HepG2 (cell line): ENCODE measurements at regions of chr14 and their contacts with region 1.

Region 1: DNA sequence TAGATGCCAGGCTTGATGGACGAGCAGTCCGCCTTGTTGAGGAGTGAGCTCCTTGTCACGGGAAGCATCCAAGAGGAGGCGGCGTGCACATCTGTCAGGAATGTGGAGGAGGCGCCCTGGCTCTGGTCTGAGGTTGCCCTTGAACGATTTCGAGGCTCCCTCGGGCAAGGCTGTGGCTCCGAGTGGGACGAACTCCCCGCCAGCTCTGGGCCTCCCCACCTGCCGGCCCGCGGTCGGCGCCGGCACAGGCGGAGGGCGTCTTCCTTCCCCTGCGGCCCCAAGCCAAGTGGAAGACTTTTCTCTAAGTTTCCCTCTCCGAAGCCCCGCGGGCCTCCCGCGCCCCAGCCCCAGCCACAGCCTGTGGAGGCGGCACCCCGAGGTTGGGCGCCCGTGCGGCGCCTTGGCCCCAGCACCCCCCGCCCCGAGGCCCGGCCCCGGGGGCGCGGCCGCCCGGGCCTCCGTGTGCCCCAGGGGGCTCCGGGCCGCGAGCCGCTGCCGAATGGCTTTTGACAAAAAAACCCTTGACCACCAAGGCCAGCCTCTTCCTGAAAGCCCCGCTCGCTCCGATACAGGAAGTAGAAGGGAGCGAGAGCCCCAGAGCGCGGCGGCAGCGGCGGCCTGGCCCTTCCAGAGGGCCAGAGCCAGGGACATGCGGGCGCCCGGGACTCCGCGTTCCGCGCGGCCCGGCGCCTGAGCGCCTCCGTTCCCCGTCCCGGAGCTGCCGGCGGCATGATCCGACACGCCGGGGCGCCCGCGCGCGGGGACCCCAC is at the start of gene RIN3:
- DNase-seq: peak; percentile 38
- ATAC-seq: peak; percentile 79
- H3K4me3 ChIP-seq: peak within 1 kb of the TSS; percentile 74 to 87 (median 82)
- H3K27ac ChIP-seq: peak within 1 kb of the TSS; percentile 79
- H3K4me1 ChIP-seq: peaks cover 41% of the 10 kb centered on the region
- H3K27me3 ChIP-seq: no peaks in the 10 kb centered on the region; a peak in 1 of 5 replicates
- CTCF ChIP-seq: no peak; the same call in 1 of the 2 replicates
- EP300 ChIP-seq: no peak
- POLR2A ChIP-seq: peak; percentile 33 to 52; a peak in 2 of 4 replicates
- RAD21 ChIP-seq: no peak
- total RNA-seq, gene RIN3: 2.3 and 2.9 TPM in 2 replicates

Region 2: GRCh38 chr14:92323011-92323915 is 190.1 kb before region 1 on chr14 and contains the start of gene SLC24A4:
- CTCF ChIA-PET with region 1: no interaction called
- POLR2A ChIA-PET with region 1: no interaction called
- in situ Hi-C with region 1: no loop called
- intact Hi-C with region 1: no loop called
- DNase-seq: no peak
- ATAC-seq: peak; percentile 64
- H3K4me3 ChIP-seq: no peak within 1 kb of the TSS; a peak in 1 of 6 replicates
- H3K27ac ChIP-seq: no peak within 1 kb of the TSS
- H3K4me1 ChIP-seq: no peaks in the 10 kb centered on the region
- H3K27me3 ChIP-seq: peaks cover 13 to 85% of the 10 kb centered on the region in 2 experiments
- CTCF ChIP-seq: no peak
- EP300 ChIP-seq: no peak
- POLR2A ChIP-seq: no peak
- RAD21 ChIP-seq: no peak
- total RNA-seq, gene SLC24A4: not detected in 2 replicates

Region 3: DNA sequence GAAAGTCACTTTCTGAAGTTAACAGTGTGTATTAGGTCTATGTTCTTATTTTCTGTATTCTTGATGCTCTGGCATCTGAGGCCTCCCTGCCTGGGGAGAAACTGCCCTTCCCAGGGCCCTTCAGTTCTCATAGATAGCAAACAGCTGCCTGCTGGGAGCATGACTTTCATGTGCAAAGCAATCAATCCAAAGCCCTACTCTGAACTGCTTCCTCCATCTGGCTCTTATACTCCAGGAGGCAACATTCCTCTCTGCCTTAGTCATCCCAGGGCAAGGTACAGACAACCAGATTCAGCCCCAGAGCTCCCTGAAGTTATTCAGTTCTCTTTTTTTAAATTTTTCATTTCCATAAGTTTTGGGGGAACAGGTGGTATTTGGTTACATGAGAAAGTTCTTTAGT is 41.5 kb before region 1 on chr14:
- CTCF ChIA-PET with region 1: no interaction called
- POLR2A ChIA-PET with region 1: interaction called, 3 read pairs
- in situ Hi-C with region 1: no loop called
- intact Hi-C with region 1: loop called (anchors 5 kb)
- DNase-seq: peak; percentile 73
- ATAC-seq: peak; percentile 91
- H3K4me3 ChIP-seq: no peak overlapping the region
- H3K27ac ChIP-seq: no peak overlapping the region
- H3K4me1 ChIP-seq: peaks cover 45% of the 10 kb centered on the region
- H3K27me3 ChIP-seq: no peaks in the 10 kb centered on the region; a peak in 2 of 5 replicates
- CTCF ChIP-seq: no peak
- EP300 ChIP-seq: no peak
- POLR2A ChIP-seq: no peak
- RAD21 ChIP-seq: no peak

Region 4: GRCh38 chr14:92538412-92538985 is 25.1 kb after region 1 on chr14:
- CTCF ChIA-PET with region 1: no interaction called
- POLR2A ChIA-PET with region 1: no interaction called
- in situ Hi-C with region 1: no loop called
- intact Hi-C with region 1: loop called (anchors 2 kb)
- DNase-seq: no peak
- ATAC-seq: no peak; the same call in 2 of the 3 replicates
- H3K4me3 ChIP-seq: no peak overlapping the region
- H3K27ac ChIP-seq: peak overlapping the region; percentile 43
- H3K4me1 ChIP-seq: peaks cover 30% of the 10 kb centered on the region
- H3K27me3 ChIP-seq: no peaks in the 10 kb centered on the region
- CTCF ChIP-seq: no peak
- EP300 ChIP-seq: no peak
- POLR2A ChIP-seq: no peak
- RAD21 ChIP-seq: no peak